ENCODE measurements at regions of chr4 and their contacts with region 1.

Region 1: DNA sequence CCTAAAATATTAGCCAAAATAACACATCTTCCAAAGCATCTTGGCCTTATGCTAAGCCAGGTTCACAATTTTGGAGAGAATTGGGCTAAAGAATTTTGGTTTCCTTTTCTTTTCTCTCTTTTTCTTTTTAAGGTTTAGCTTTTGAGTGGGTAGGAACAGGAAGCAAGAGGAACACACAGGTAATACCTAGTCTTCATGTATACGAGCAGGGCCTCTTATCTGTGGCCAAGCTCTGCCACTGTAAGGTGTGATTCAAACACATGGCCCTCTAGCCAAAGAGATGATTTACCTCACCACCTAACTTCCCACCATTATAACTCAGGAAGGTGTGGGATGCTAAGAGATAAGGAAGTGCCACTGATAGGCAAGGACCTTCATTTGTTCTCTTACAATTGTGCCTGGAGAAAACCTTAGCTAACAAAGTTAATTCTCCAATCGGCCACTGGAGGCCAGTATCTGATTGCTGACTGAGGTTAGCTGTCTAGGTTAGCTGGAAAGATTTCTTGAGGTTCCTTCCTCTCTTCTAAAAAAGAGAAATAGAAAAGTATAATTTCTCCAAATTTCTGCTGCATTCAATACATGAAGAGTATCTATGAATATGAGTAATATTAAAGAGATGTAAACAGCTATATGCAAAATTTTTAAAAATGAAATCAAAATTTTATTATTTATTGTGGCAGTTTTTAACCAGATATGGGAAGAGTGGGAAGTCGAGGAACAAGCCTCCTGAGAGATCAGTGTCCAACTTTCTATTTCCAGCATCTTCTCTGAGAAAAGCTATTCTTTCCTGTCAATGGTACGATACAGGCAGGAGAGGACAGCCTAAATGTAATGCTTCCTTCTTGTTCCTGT is 30.1 kb upstream of the BBS7 start:
- DNase-seq: peak; percentile 61
- ATAC-seq: peak; percentile 89
- H3K4me3 ChIP-seq: no peak overlapping the region
- H3K27ac ChIP-seq: no peak overlapping the region
- H3K4me1 ChIP-seq: no peaks in the 10 kb centered on the region
- H3K27me3 ChIP-seq: no peaks in the 10 kb centered on the region
- CTCF ChIP-seq: peak; percentile 84
- POLR2A ChIP-seq: no peak
- RAD21 ChIP-seq: peak; percentile 94

Region 2: GRCh38 chr4:121339307-121339706 is 561.1 kb before region 1 on chr4:
- CTCF ChIA-PET with region 1: no interaction called
- POLR2A ChIA-PET with region 1: no interaction called
- dilution Hi-C with region 1: no loop called
- in situ Hi-C with region 1: no loop called
- intact Hi-C with region 1: no loop called
- DNase-seq: no peak
- ATAC-seq: no peak
- H3K4me3 ChIP-seq: no peak overlapping the region
- H3K27ac ChIP-seq: no peak overlapping the region
- H3K4me1 ChIP-seq: no peaks in the 10 kb centered on the region
- H3K27me3 ChIP-seq: no peaks in the 10 kb centered on the region
- CTCF ChIP-seq: no peak
- POLR2A ChIP-seq: no peak
- RAD21 ChIP-seq: no peak

Region 3: DNA sequence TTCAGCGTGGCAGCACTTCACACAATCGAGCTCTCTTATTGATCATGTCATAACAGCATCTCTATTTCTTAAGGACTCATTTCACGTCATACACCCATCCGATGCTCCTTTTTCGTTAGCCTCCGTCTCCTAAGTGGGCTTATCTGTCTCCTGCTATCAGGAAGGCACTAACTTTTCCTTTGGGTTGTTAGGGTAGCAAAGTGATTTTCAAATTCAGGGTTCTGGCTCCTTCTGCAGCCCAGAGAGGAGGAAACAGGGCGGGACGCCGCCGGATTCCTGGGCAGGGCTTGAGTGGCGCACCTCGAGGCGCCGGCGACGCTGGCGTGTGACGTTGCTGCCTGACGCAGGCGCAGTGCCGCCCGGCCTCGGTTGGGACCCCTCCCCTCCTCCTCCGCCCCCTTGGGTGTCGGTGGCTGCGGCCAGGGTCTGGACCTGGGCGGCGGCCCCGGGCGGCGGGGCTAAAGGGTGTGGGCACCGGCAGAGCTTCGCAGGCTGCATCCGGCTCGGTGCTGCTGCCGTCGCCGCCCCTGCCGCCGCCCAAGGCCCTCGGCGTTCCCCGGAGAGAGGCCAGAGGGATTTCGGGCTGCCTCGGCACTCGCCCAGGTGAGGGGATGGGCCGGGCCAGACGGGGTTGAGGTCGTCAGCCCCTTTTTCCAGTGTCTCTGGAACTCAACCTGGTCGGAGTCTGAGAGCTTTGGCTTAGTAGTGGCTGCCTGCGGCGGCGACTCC is 251.8 kb after region 1 on chr4 and contains the start of gene BLTP1:
- CTCF ChIA-PET with region 1: interaction called, 4 read pairs
- POLR2A ChIA-PET with region 1: no interaction called
- dilution Hi-C with region 1: no loop called
- in situ Hi-C with region 1: no loop called
- intact Hi-C with region 1: loop called (anchors 5 kb)
- DNase-seq: peak; percentile 75
- ATAC-seq: peak; percentile 99
- H3K4me3 ChIP-seq: peak within 1 kb of the TSS; percentile 91
- H3K27ac ChIP-seq: peak within 1 kb of the TSS; percentile 81
- H3K4me1 ChIP-seq: no peaks in the 10 kb centered on the region
- H3K27me3 ChIP-seq: no peaks in the 10 kb centered on the region
- CTCF ChIP-seq: no peak
- POLR2A ChIP-seq: no peak
- RAD21 ChIP-seq: 0 out of 2 replicates have a peak, but pooled peaks have one; percentile 9
- total RNA-seq, gene BLTP1: 92.7 and 111 TPM in 2 replicates

Region 4: DNA sequence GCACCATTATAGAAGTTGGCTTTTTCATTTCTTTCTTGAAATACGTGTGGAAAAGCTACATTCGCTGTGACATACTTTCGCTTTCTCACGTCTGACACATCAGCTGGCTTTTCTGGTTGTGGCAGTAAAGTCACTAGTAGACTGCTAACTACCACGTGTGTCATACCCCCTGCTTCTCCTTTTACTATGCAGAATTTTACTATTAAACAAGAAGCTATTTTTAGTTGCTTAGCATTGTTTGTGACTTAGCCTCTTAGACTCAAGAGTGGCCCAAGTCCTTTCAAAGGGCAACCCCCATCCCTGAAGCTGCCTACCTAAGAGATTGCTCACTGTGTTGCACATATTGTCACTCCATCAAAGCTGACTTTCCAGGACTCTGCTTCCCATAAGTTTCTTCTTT is 558.3 kb after region 1 on chr4:
- CTCF ChIA-PET with region 1: no interaction called
- POLR2A ChIA-PET with region 1: no interaction called
- dilution Hi-C with region 1: no loop called
- in situ Hi-C with region 1: no loop called
- intact Hi-C with region 1: loop called (anchors 10 kb)
- DNase-seq: peak; percentile 17
- ATAC-seq: no peak; the same call in 1 of the 2 replicates
- H3K4me3 ChIP-seq: peak overlapping the region; percentile 27; the same call in 1 of the 2 replicates
- H3K27ac ChIP-seq: no peak overlapping the region
- H3K4me1 ChIP-seq: peaks cover 2% of the 10 kb centered on the region; the same call in 1 of the 2 replicates
- H3K27me3 ChIP-seq: no peaks in the 10 kb centered on the region
- CTCF ChIP-seq: no peak
- POLR2A ChIP-seq: no peak
- RAD21 ChIP-seq: no peak

Region 5: DNA sequence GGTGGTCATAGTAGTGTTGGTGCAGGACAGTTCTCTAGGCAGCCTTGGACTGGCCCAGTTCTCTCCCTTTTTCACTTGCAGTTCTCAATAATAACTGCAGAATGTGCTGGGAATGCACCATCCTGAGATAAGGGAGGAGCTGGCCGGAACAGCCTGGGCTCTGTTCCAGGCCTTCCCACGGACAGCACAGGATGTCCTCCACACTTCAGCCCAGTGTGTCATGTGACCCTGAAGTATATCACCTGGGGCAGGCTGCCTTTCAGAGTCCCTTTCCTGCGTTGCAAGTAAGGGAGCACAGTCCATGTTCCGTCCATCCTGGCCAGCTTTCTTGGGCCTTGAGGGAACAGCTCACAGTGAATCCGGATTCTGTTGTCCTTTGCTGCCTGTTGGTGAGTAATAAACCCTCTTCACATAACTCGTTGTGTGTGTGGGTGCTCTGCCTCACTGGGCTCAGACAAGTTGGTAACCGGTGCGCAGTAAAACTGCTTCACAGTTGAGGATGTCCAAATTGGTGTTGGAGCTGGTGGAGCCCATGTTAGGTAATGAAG is 799.9 kb after region 1 on chr4:
- CTCF ChIA-PET with region 1: no interaction called
- POLR2A ChIA-PET with region 1: no interaction called
- dilution Hi-C with region 1: no loop called
- in situ Hi-C with region 1: loop called (anchors 25 kb)
- intact Hi-C with region 1: loop called (anchors 10 kb)
- DNase-seq: peak; percentile 65
- ATAC-seq: peak; percentile 79
- H3K4me3 ChIP-seq: no peak overlapping the region
- H3K27ac ChIP-seq: no peak overlapping the region
- H3K4me1 ChIP-seq: no peaks in the 10 kb centered on the region
- H3K27me3 ChIP-seq: no peaks in the 10 kb centered on the region; the same call in 1 of the 2 replicates
- CTCF ChIP-seq: no peak
- POLR2A ChIP-seq: no peak
- RAD21 ChIP-seq: no peak

Measured in IMR-90 (cell line).